Activated T-helper 1 cell treated with anti-CD3 and anti-CD28 coated beads, Interleukin-12 subunit alpha, Interleukin-12 subunit beta, Interleukin-2, Interleukin-4 antibody, amounts not matched to agents 30 ng/mL and 10 ng/mL and 1 ng/mL, durations not matched to agents 14 hours and 24 hours and 36 hours (primary cell): ENCODE measurements at regions of chr5 and their contacts with region 1.

Region 1: GRCh38 chr5:102762095-102762534 is 7.0 kb downstream of the PAM start:
- DNase-seq: no peak
- H3K4me3 Mint-ChIP-seq: peak overlapping the region; percentile 73
- H3K27ac Mint-ChIP-seq: peak overlapping the region; percentile 80
- H3K4me1 Mint-ChIP-seq: peaks cover 76% of the 10 kb centered on the region
- H3K27me3 Mint-ChIP-seq: no peaks in the 10 kb centered on the region

Region 2: GRCh38 chr5:102747386-102748166 is 14.5 kb before region 1 on chr5:
- intact Hi-C with region 1: loop called (anchors 1 kb)
- DNase-seq: no peak
- H3K4me3 Mint-ChIP-seq: peak overlapping the region; percentile 20
- H3K27ac Mint-ChIP-seq: peak overlapping the region; percentile 63
- H3K4me1 Mint-ChIP-seq: peaks cover 21% of the 10 kb centered on the region
- H3K27me3 Mint-ChIP-seq: no peaks in the 10 kb centered on the region

Region 3: GRCh38 chr5:103098993-103099392 is 336.9 kb after region 1 on chr5:
- intact Hi-C with region 1: no loop called
- DNase-seq: no peak
- H3K4me3 Mint-ChIP-seq: no peak overlapping the region
- H3K27ac Mint-ChIP-seq: no peak overlapping the region
- H3K4me1 Mint-ChIP-seq: no peaks in the 10 kb centered on the region
- H3K27me3 Mint-ChIP-seq: no peaks in the 10 kb centered on the region